ENCODE measurements at regions of chr4 and their contacts with region 1.

Region 1: GRCh38 chr4:143482840-143483239 is 30.7 kb upstream of the SMARCA5 start:
- DNase-seq: no peak
- H3K4me3 ChIP-seq: no peak overlapping the region
- H3K27ac ChIP-seq: no peak overlapping the region
- H3K4me1 ChIP-seq: no peaks in the 10 kb centered on the region
- H3K27me3 ChIP-seq: no peaks in the 10 kb centered on the region
- CTCF ChIP-seq: peak in 5 of 6 experiments; percentile 48 to 64 (median 50)
- POLR2A ChIP-seq: no peak

Region 2: GRCh38 chr4:143207557-143207956 is 275.3 kb before region 1 on chr4:
- intact Hi-C with region 1: loop called (anchors 10 kb)
- DNase-seq: no peak
- H3K4me3 ChIP-seq: no peak overlapping the region
- H3K27ac ChIP-seq: no peak overlapping the region
- H3K4me1 ChIP-seq: no peaks in the 10 kb centered on the region
- H3K27me3 ChIP-seq: no peaks in the 10 kb centered on the region
- CTCF ChIP-seq: peak in 4 of 6 experiments; percentile 31 to 53 (median 42)
- POLR2A ChIP-seq: no peak

Region 3: DNA sequence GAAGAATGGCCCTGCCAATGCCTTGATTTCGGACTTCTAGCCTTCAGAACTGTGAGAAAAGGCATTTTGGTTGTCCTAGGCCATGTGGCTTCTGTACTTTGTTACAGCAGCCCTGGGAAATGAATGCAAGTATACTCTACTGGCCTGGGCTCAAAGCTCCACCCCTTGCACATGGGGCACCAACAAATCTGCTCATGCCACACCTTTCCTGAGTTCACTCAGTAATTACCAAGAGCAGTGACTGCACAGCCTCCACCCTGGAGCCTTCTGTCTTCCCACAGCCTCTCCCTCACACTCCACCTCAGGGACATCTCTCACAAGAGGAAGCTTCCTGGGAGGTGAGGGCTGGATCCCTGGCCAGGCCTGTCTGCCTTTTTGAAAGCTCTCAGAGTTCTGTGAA is 175.3 kb before region 1 on chr4:
- intact Hi-C with region 1: no loop called
- DNase-seq: no peak
- H3K4me3 ChIP-seq: no peak overlapping the region
- H3K27ac ChIP-seq: no peak overlapping the region
- H3K4me1 ChIP-seq: peaks cover 0 to 5% (median 0%) of the 10 kb centered on the region in 3 donors
- H3K27me3 ChIP-seq: no peaks in the 10 kb centered on the region
- CTCF ChIP-seq: no peak
- POLR2A ChIP-seq: no peak

Region 4: GRCh38 chr4:143320113-143320512 is 162.7 kb before region 1 on chr4:
- intact Hi-C with region 1: no loop called
- DNase-seq: no peak
- H3K4me3 ChIP-seq: no peak overlapping the region
- H3K27ac ChIP-seq: no peak overlapping the region
- H3K4me1 ChIP-seq: peaks cover 0 to 6% (median 0%) of the 10 kb centered on the region in 3 donors
- H3K27me3 ChIP-seq: no peaks in the 10 kb centered on the region
- CTCF ChIP-seq: no peak
- POLR2A ChIP-seq: no peak

Measured in esophagus squamous epithelium (tissue), 5 donors.